Left colon (tissue), 2 donors: ENCODE measurements at regions of chr19 and their contacts with region 1.

Region 1: DNA sequence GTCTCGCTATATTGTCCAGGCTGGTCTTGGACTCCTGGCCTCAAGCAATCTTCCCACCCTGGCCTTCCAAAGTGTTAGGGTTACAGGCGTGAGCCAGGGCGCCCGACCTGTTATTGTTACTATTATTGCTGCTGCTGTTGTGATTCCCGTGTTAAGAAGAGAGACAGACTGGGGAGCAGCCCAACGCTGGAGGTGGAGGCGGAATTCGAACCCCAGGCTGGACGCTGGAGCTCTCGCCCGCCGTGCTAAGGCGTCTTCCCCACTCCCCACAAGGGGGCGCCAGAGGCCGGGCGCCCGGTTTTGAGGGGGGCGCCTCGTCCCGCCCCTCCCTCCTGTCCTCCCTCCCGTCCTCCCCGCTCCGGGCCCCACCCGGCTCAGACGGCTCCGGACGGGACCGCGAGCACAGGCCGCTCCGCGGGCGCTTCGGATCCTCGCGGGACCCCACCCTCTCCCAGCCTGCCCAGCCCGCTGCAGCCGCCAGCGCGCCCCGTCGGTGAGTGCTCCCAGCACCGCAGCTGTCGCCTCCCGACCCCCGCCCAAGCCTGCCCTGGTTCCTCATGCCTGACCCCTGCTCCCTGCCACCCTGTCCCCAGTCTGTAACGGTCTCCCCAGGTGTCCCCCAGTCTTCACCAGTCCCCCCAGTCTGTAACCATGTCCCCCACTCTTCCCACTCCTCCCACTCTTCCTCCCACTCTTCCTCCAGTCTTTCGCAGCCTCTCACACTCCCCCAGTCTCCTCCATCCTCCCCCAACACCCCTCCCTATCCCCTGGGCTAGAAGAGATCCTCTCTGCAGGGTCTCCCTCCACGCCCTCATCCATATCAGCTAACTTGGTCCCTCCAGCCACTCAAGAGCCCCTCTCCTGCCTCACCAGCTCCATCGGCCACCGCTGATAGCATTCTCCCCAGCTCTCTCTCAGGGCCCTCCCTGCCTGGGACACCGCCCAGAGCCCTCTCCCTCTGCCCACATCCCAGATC is at the start of gene EHD2:
- DNase-seq: peak in 1 of 2 donors; percentile 35
- ATAC-seq: peak; percentile 56
- total RNA-seq, gene EHD2: 9.6 to 29.6 TPM

Region 2: GRCh38 chr19:47742634-47743033 is 29.3 kb after region 1 on chr19:
- intact Hi-C with region 1: loop called in 1 of 2 experiments (anchors 2 kb)
- DNase-seq: no peak
- ATAC-seq: no peak